HEK293T (cell line): ENCODE measurements at regions of chr5 and their contacts with region 1.

Region 1: GRCh38 chr5:177425801-177426565 is 493 bp upstream of the GRK6 start:
- DNase-seq: peak; percentile 100

Region 2: GRCh38 chr5:177414481-177414880 is 11.5 kb before region 1 on chr5:
- CTCF ChIA-PET with region 1: interaction called, 3 read pairs
- POLR2A ChIA-PET with region 1: interaction called, 19 read pairs
- DNase-seq: no peak

Region 3: DNA sequence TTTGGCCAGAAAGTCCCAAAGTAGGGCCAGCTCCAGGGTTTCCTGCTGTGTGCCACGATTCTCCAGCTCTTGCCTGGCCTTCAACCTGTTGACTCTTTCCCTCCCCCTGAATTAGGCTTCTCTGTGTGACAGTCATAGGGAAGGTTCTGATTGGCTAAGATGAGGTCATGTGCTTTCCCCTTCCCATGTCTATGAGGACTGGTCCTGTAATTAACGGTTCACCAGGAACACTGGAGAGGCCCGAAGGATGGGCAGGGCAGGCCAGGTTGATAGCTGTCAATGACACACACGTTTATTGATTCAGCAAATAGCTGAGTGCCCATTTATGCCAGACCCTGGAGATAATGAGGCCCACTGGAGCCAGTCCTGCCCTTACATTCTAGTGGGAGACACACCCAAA is 11.6 kb after region 1 on chr5:
- CTCF ChIA-PET with region 1: interaction called, 4 read pairs
- POLR2A ChIA-PET with region 1: interaction called, 69 read pairs
- DNase-seq: no peak

Region 4: DNA sequence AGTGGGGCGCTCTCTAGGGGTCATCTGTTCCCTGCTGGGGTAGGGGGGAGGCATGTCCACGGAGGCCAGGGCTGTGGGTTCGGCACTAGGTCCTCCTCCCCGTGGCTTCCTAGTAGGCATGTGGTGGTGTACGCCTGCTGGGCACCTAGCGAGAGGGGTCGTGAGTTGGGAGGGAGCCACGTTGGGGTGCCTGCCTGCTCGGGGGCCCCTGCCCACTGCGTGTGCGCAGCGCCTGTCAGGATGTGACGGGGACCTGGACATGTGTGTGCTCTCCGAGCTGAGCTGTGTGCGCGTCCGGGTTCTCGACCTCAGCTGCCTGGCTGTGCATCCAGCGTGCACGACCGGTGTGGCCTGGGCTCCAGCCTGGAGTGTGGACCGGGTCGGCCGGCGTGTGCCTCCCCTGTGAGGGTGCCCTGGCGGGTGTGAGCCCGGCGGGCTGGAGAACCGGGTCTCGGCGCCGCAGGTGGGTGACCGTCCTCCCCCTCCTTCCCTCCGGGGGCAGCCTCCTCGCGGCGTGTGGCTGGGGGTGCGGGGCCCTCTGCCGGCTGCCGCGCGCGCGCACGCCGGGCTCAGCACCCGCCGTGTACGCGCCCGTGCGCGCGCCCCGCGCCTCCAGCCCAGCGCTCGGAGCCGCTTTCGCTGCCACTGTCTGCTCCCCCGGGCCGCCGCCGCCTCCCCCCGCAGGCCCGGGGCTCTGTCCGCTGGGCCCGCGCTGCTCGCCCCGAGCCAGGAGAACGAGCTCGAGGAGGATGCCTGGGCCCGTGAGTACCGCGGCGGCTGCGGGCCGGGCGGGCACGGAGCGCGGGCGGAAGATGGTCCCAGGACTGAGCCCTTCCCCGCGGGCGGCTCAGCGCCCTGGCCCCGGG is 20.4 kb after region 1 on chr5 and contains the start of gene PRR7:
- CTCF ChIA-PET with region 1: no interaction called
- POLR2A ChIA-PET with region 1: interaction called, 69 read pairs
- DNase-seq: peak; percentile 81